ENCODE measurements at regions of chr10 and their contacts with region 1.

Region 1: DNA sequence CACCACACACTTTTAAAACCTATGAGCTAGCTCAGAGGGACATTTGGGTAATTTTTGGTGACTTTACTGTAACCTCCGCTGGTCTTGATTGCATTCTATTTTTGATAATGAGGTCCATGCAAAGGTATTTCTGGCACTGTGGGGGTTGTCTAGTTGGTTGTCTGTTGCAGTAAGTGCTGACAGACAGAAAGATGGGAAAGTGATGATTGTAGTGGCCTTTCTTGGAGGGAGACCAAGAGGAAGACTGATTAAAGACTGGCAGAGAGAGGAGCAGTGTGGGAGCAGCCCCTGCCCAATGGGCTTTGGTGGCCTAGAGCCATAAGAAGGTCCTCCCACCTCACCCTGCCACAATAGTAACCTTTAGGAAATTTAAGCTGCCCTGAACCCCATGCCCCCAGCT is 173.4 kb upstream of the CTBP2 start:
- DNase-seq: no peak
- H3K4me3 ChIP-seq: no peak overlapping the region
- H3K27ac ChIP-seq: no peak overlapping the region
- H3K4me1 ChIP-seq: no peaks in the 10 kb centered on the region
- H3K27me3 ChIP-seq: no peaks in the 10 kb centered on the region
- CTCF ChIP-seq: no peak
- POLR2A ChIP-seq: no peak

Region 2: GRCh38 chr10:125289492-125289891 is 44.3 kb before region 1 on chr10:
- intact Hi-C with region 1: loop called (anchors 2 kb)
- DNase-seq: no peak
- H3K4me3 ChIP-seq: no peak overlapping the region
- H3K27ac ChIP-seq: no peak overlapping the region
- H3K4me1 ChIP-seq: no peaks in the 10 kb centered on the region
- H3K27me3 ChIP-seq: no peaks in the 10 kb centered on the region
- CTCF ChIP-seq: no peak
- POLR2A ChIP-seq: no peak

Region 3: DNA sequence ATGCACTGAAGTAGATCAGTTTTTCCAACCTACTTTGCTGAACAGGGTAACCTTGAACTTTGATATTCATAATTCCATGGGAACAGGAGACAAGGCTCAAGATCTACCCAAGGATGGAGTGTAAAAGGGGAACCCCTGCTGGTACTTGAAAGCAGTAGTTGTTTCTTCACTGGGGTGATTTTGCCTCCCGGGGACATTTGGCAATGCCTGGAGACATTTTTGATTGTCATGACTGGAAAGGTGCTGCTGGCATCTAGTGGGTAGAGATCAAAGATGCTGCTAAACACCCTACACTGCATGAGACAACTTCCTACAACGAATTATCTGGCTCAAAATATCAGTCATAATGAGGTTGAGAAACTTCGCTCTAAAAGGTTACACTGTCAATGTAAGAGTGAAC is 41.4 kb after region 1 on chr10:
- intact Hi-C with region 1: no loop called
- DNase-seq: no peak
- H3K4me3 ChIP-seq: no peak overlapping the region
- H3K27ac ChIP-seq: no peak overlapping the region
- H3K4me1 ChIP-seq: no peaks in the 10 kb centered on the region
- H3K27me3 ChIP-seq: peaks cover 0 to 3% of the 10 kb centered on the region in 2 donors
- CTCF ChIP-seq: no peak
- POLR2A ChIP-seq: no peak

Region 4: GRCh38 chr10:126294451-126294850 is 960.7 kb after region 1 on chr10:
- intact Hi-C with region 1: no loop called
- DNase-seq: no peak
- H3K4me3 ChIP-seq: no peak overlapping the region
- H3K27ac ChIP-seq: peak overlapping the region in 1 of 2 donors; percentile 45
- H3K4me1 ChIP-seq: no peaks in the 10 kb centered on the region
- H3K27me3 ChIP-seq: no peaks in the 10 kb centered on the region
- CTCF ChIP-seq: no peak
- POLR2A ChIP-seq: no peak

Measured in breast epithelium (tissue), 4 donors.